Posterior cingulate gyrus (tissue), 11 donors: ENCODE measurements at regions of chr1 and their contacts with region 1.

Region 1: GRCh38 chr1:20493839-20494608 is 8.0 kb upstream of the CAMK2N1 start:
- DNase-seq: peak; percentile 72 to 98 (median 90)

Region 2: DNA sequence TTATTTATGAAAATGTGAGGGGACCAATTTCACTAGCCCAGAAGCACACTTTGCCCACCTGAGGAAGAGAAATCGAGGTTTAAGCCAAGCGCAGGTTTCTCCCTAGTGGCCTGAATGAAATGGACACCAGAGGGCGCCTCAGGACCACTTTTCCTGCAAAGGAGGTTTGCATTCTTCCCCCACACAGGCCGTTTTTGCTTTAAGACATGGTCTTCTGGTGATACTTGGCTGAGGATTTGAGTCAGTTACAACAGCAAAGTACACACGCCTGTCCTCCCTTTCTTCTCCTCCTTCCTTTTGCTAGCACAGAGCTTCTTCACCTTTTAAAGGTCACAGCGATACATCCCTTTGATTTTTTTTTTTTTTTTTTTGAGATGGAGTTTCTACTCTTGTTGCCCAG is 576.0 kb before region 1 on chr1:
- intact Hi-C with region 1: loop called (anchors 5 kb)
- DNase-seq: peak; percentile 53 to 96 (median 86)

Region 3: GRCh38 chr1:20212685-20213331 is 281.2 kb before region 1 on chr1:
- intact Hi-C with region 1: loop called (anchors 2 kb)
- DNase-seq: peak; percentile 41 to 95 (median 64)

Region 4: GRCh38 chr1:20321573-20321972 is 172.5 kb before region 1 on chr1:
- intact Hi-C with region 1: no loop called
- DNase-seq: peak in 2 of 10 donors; percentile 36 to 46

Region 5: DNA sequence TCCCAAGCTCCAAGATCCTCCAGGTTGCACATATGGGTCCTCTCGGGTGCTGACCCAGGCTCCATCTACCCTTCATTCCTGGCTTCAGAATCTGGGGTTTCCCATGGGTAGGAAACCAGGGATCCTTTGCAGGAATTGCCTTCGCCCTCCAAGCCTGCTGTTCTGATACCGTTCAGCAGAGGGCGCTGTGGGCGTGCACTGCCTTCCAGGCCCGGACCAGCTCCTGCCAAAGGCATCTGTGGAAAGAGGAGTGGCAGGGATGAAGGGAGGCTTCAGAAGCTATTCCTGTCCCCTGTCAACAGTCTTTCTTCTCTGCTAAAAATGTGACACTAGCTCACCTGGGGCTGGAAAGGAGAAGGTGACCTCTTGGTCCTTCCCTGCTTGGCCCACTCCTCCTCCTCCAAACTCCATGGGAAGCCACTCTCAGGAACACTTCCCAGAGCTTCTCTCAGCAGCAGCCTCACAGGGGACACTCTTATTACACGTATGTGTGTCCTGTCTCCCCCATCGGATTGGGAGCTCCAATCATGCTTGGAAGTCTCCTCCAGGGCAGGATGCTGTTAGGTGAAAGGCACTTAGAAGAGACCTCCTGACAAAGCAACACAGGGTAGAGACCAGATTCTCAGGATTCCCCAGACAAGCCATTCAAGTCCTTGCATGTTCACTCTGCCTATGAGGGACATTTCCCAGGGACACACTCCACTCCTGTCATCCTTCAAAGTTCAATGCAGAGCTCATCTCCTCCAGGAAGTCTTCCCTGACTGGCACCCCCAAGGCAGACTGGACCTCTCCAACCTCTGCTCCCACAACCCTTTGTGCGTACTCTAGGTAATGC is 132.0 kb before region 1 on chr1:
- intact Hi-C with region 1: loop called (anchors 1 kb)
- DNase-seq: peak; percentile 73 to 97 (median 90)

Region 6: DNA sequence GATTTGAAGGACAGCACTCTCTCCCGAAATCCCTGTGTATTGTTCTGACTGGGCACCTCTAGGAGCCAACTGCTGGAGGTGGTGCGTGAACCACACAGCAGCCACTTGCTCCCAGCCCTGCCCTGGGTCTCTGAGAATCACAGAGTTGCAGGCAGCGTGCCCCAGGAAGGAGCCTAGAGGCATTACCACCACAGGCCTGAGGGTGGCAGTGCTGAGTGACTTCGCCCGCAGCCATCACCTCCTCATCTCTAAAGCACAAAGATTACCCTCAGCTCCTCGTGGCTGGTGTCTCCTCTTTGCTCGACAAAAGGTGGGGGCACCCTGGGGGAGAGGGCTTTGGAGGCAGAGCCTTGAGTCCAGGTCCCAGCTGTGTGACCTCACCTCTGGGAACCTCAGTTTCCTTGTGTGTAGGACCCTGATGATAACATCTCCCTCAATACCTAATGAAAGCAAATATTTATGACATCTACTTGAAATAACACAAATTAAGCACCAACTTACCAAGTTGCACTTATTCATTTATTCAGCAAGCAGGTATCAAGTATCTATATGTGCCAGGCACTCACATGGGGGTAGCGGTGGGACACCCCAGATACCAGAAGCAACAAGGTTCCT is 117.0 kb before region 1 on chr1:
- intact Hi-C with region 1: loop called (anchors 1 kb)
- DNase-seq: peak in 9 of 10 donors; percentile 57 to 96 (median 75)

Region 7: GRCh38 chr1:20430355-20431175 is 63.5 kb before region 1 on chr1:
- intact Hi-C with region 1: loop called (anchors 5 kb)
- DNase-seq: peak in 7 of 10 donors; percentile 44 to 91 (median 58)